ENCODE measurements at regions of chr10 and their contacts with region 1.

Region 1: GRCh38 chr10:103605359-103606095 is 112.0 kb downstream of the NEURL1 start:
- DNase-seq: no peak
- H3K4me3 ChIP-seq: no peak overlapping the region
- CTCF ChIP-seq: peak; percentile 82

Region 2: GRCh38 chr10:103685880-103686669 is 80.5 kb after region 1 on chr10:
- in situ Hi-C with region 1: loop called (anchors 10 kb)
- DNase-seq: no peak
- H3K4me3 ChIP-seq: no peak overlapping the region
- CTCF ChIP-seq: peak; percentile 99

Region 3: DNA sequence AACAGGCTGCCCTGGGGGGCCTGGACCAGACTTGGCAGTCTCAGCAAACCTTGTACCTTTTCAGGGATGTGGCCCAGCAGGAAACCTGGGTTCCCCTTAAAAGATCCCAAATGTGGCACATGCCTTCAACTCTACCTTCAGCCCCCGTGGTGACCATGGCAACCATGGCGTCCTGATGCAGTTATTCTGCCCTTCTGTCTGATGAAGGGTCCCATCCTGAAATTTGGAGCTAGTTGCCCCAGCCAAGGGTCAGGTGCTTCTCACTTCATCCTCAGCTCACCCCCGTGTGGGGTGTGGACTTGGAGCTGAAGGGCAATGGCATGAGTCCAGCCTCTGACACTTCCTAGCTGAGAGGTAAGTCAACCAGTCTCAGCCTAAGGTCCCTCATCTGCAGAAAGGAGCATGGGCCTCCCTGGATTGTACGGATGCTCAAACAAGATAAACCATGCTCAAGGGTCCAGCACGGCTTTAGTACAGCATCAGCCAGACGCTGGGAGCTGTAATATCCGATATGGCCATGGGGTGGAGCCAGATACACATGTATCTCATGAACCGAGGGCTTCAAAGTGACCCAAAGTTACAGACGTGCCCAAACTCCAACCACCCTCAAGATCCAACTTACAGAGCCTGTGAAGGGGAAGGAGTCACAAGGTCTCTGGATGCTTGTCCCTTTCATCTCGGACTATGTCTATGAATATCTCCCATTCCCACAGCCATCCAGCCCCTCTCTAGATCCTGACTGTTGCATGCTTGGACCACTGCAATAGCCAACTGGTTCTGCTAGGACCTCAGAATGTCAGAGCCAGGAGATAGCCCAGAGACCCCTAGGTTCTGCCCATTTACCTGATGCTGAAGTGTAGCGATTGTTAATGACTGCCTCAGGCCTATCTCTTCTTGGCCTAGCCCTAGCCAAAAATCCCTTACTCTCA is 107.3 kb after region 1 on chr10:
- in situ Hi-C with region 1: loop called (anchors 5 kb)
- DNase-seq: peak; percentile 65
- H3K4me3 ChIP-seq: no peak overlapping the region
- CTCF ChIP-seq: peak; percentile 76

Region 4: GRCh38 chr10:103859161-103860086 is 253.9 kb after region 1 on chr10:
- in situ Hi-C with region 1: loop called (anchors 25 kb)
- DNase-seq: peak; percentile 56
- H3K4me3 ChIP-seq: no peak overlapping the region
- CTCF ChIP-seq: peak; percentile 68

Measured in astrocyte of the cerebellum (primary cell).